ENCODE measurements at regions of chr14 and their contacts with region 1.

Region 1: GRCh38 chr14:23006544-23007419 is 3.2 kb downstream of the C14orf93 start:
- DNase-seq: peak; percentile 95 to 99 (median 98)
- H3K4me3 ChIP-seq: peak overlapping the region; percentile 68
- H3K4me3 Mint-ChIP-seq: peak overlapping the region; percentile 90 to 98 (median 97)
- H3K27ac ChIP-seq: peak overlapping the region; percentile 88
- H3K27ac Mint-ChIP-seq: peak overlapping the region; percentile 84 to 99 (median 98)
- H3K4me1 ChIP-seq: peaks cover 36% of the 10 kb centered on the region
- H3K4me1 Mint-ChIP-seq: peaks cover 40 to 56% (median 55%) of the 10 kb centered on the region in 3 donors
- H3K27me3 ChIP-seq: no peaks in the 10 kb centered on the region
- H3K27me3 Mint-ChIP-seq: no peaks in the 10 kb centered on the region

Region 2: DNA sequence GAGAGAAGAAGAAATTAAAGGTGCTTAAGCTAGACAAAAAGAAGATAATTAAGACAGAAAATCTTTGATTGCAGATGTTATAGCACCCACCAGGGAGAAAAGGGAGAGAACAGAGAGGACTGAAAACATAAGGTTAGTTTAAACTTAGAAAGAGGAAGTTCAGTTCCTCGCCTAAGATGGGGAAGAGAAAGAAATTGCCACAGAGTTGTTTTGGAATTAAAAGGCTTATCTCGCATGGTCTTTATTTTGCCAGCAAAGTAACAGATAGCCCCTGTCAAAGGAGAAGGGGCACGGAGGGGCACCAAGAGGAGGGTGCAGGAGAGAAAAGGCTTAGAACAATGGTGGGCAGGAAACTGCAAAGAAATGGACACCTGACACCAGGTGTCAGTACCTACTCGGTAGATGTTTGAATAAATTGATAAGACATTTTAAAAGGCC is 258.1 kb before region 1 on chr14:
- CTCF ChIA-PET with region 1: no interaction called
- POLR2A ChIA-PET with region 1: no interaction called
- DNase-seq: no peak
- H3K4me3 ChIP-seq: no peak overlapping the region
- H3K4me3 Mint-ChIP-seq: no peak overlapping the region
- H3K27ac ChIP-seq: no peak overlapping the region
- H3K27ac Mint-ChIP-seq: peak overlapping the region in 2 of 8 donors; percentile 26 to 27
- H3K4me1 ChIP-seq: no peaks in the 10 kb centered on the region
- H3K4me1 Mint-ChIP-seq: peaks cover 0 to 4% (median 0%) of the 10 kb centered on the region in 3 donors
- H3K27me3 ChIP-seq: no peaks in the 10 kb centered on the region
- H3K27me3 Mint-ChIP-seq: peaks cover 17 to 50% of the 10 kb centered on the region in 2 donors

Region 3: GRCh38 chr14:22850944-22851764 is 155.6 kb before region 1 on chr14:
- CTCF ChIA-PET with region 1: no interaction called
- POLR2A ChIA-PET with region 1: no interaction called
- DNase-seq: no peak
- H3K4me3 ChIP-seq: no peak overlapping the region
- H3K4me3 Mint-ChIP-seq: no peak overlapping the region
- H3K27ac ChIP-seq: no peak overlapping the region
- H3K27ac Mint-ChIP-seq: peak overlapping the region in 1 of 8 donors; percentile 60
- H3K4me1 ChIP-seq: peaks cover 12% of the 10 kb centered on the region
- H3K4me1 Mint-ChIP-seq: peaks cover 4 to 10% (median 9%) of the 10 kb centered on the region in 3 donors
- H3K27me3 ChIP-seq: peaks cover 4% of the 10 kb centered on the region
- H3K27me3 Mint-ChIP-seq: peaks cover 10 to 28% of the 10 kb centered on the region in 2 donors

Region 4: GRCh38 chr14:22955702-22956569 is 50.8 kb before region 1 on chr14:
- CTCF ChIA-PET with region 1: no interaction called
- POLR2A ChIA-PET with region 1: no interaction called
- DNase-seq: no peak
- H3K4me3 ChIP-seq: peak overlapping the region; percentile 87
- H3K4me3 Mint-ChIP-seq: peak overlapping the region; percentile 89 to 96 (median 91)
- H3K27ac ChIP-seq: peak overlapping the region; percentile 84
- H3K27ac Mint-ChIP-seq: peak overlapping the region; percentile 67 to 97 (median 90)
- H3K4me1 ChIP-seq: peaks cover 19% of the 10 kb centered on the region
- H3K4me1 Mint-ChIP-seq: peaks cover 14 to 24% (median 17%) of the 10 kb centered on the region in 3 donors
- H3K27me3 ChIP-seq: no peaks in the 10 kb centered on the region
- H3K27me3 Mint-ChIP-seq: no peaks in the 10 kb centered on the region

Region 5: DNA sequence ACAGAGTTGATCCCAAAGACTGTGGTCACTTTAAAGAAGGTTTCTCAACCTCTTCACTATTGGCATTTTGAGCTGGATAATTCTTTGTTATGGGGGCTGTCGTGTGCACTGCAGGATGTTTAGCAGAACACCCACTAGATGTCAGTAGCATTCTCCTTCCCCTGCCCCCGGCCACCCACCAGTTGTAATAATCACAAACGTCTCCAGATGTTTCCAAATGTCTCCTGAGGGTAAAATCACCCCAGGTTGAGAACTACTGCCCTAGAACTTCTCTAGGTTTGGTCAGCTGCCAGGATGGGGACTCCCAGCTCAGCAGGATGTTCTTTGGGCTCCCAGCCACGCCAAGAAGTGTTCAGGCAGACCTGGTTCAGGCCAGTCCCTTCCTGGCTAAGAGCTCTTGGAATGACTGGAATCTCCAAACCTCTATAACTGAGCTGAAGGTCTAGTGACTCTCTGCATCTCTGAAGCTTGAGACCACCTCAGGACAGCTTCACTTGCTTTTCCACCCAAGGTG is 12.0 kb before region 1 on chr14:
- CTCF ChIA-PET with region 1: interaction called, 51 read pairs
- POLR2A ChIA-PET with region 1: interaction called, 4 read pairs
- DNase-seq: peak in 2 of 5 donors; percentile 39 to 51
- H3K4me3 ChIP-seq: no peak overlapping the region
- H3K4me3 Mint-ChIP-seq: no peak overlapping the region
- H3K27ac ChIP-seq: no peak overlapping the region
- H3K27ac Mint-ChIP-seq: peak overlapping the region in 1 of 8 donors; percentile 19
- H3K4me1 ChIP-seq: no peaks in the 10 kb centered on the region
- H3K4me1 Mint-ChIP-seq: peaks cover 0 to 5% (median 0%) of the 10 kb centered on the region in 3 donors
- H3K27me3 ChIP-seq: no peaks in the 10 kb centered on the region
- H3K27me3 Mint-ChIP-seq: no peaks in the 10 kb centered on the region

Region 6: GRCh38 chr14:23025151-23025814 is 18.5 kb after region 1 on chr14:
- CTCF ChIA-PET with region 1: interaction called, 4 read pairs
- POLR2A ChIA-PET with region 1: interaction called, 10 read pairs
- DNase-seq: no peak
- H3K4me3 ChIP-seq: no peak overlapping the region
- H3K4me3 Mint-ChIP-seq: peak overlapping the region in 1 of 7 donors; percentile 27
- H3K27ac ChIP-seq: no peak overlapping the region
- H3K27ac Mint-ChIP-seq: peak overlapping the region in 4 of 8 donors; percentile 23 to 60 (median 36)
- H3K4me1 ChIP-seq: peaks cover 57% of the 10 kb centered on the region
- H3K4me1 Mint-ChIP-seq: peaks cover 21 to 39% (median 29%) of the 10 kb centered on the region in 3 donors
- H3K27me3 ChIP-seq: no peaks in the 10 kb centered on the region
- H3K27me3 Mint-ChIP-seq: no peaks in the 10 kb centered on the region

Region 7: GRCh38 chr14:23068476-23069412 is 62.0 kb after region 1 on chr14:
- CTCF ChIA-PET with region 1: interaction called, 15 read pairs
- POLR2A ChIA-PET with region 1: interaction called, 3 read pairs
- DNase-seq: peak; percentile 49 to 79 (median 72)
- H3K4me3 ChIP-seq: no peak overlapping the region
- H3K4me3 Mint-ChIP-seq: peak overlapping the region in 6 of 7 donors; percentile 10 to 72 (median 48)
- H3K27ac ChIP-seq: no peak overlapping the region
- H3K27ac Mint-ChIP-seq: peak overlapping the region; percentile 49 to 96 (median 72)
- H3K4me1 ChIP-seq: peaks cover 28% of the 10 kb centered on the region
- H3K4me1 Mint-ChIP-seq: peaks cover 37 to 50% (median 41%) of the 10 kb centered on the region in 3 donors
- H3K27me3 ChIP-seq: no peaks in the 10 kb centered on the region
- H3K27me3 Mint-ChIP-seq: no peaks in the 10 kb centered on the region

Measured in CD8-positive, alpha-beta memory T cell (primary cell).